SK-N-SH (cell line): ENCODE measurements at regions of chr3 and their contacts with region 1.

Region 1: DNA sequence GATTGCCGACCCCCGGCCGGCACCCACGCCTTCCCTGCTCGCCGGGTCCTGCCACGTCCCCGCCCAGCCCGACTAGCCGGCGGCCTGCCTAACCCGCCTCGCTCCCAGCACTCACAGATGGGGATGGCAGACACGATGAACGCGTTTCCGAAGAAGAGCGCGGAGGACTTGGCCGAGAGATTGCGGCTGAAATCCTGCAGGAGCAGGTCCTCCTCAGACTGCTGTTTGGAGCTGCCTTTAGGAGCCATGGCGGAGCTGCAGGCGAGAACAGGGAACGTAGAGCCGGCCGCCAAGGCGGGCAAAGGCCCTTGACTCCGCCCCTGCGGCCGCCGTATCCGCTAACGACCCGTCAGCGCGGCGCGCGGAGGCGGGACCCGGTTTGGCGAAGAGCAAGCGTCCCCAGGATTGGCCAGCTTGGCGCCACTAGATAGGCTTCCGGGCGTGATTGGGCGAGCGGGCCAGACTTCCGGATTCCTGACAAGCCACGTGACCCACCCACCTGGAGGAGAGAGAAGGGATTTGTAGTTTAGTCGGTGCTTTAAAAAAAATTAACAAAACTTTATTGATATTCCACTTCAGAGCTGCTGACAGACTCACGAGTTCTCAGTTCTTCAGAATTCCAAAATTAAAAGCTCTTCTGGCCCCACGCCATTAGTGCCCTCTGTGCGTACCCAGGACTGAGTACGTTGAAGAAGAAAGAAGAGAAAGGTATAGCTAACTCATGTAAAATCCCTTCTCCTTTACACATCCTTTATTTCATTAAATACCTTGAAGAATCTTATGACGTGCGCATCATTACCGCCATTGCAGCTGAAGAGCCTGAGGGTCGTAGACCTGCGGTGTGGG is at the start of gene SSR3:
- DNase-seq: peak; percentile 92
- H3K4me3 ChIP-seq: peak within 1 kb of the TSS; percentile 92 to 94
- H3K27ac ChIP-seq: peak within 1 kb of the TSS; percentile 89 to 94
- H3K4me1 ChIP-seq: peaks cover 25 to 31% of the 10 kb centered on the region in 2 experiments
- H3K27me3 ChIP-seq: no peaks in the 10 kb centered on the region
- CTCF ChIP-seq: no peak
- EP300 ChIP-seq: peak in 1 of 2 experiments; percentile 27; a peak in 1 of 4 replicates
- RAD21 ChIP-seq: no peak
- polyA plus RNA-seq, gene SSR3: 61.7 and 96.1 TPM in 2 replicates

Region 2: GRCh38 chr3:156542715-156543555 is 12.1 kb before region 1 on chr3:
- CTCF ChIA-PET with region 1: interaction called, 12 read pairs
- POLR2A ChIA-PET with region 1: interaction called, 3 read pairs
- DNase-seq: no peak
- H3K4me3 ChIP-seq: no peak overlapping the region
- H3K27ac ChIP-seq: peak overlapping the region; percentile 72 to 93
- H3K4me1 ChIP-seq: peaks cover 0 to 60% of the 10 kb centered on the region in 2 experiments; a peak in 3 of 4 replicates
- H3K27me3 ChIP-seq: no peaks in the 10 kb centered on the region
- CTCF ChIP-seq: no peak
- EP300 ChIP-seq: no peak
- RAD21 ChIP-seq: no peak

Region 3: GRCh38 chr3:156891665-156892064 is 336.6 kb after region 1 on chr3:
- CTCF ChIA-PET with region 1: no interaction called
- POLR2A ChIA-PET with region 1: no interaction called
- DNase-seq: no peak
- H3K4me3 ChIP-seq: no peak overlapping the region
- H3K27ac ChIP-seq: no peak overlapping the region
- H3K4me1 ChIP-seq: peaks cover 0 to 6% of the 10 kb centered on the region in 2 experiments; a peak in 2 of 4 replicates
- H3K27me3 ChIP-seq: no peaks in the 10 kb centered on the region
- CTCF ChIP-seq: peak; percentile 7; the same call in 1 of the 2 replicates
- EP300 ChIP-seq: no peak
- RAD21 ChIP-seq: no peak